ENCODE measurements at regions of chr6 and their contacts with region 1.

Region 1: GRCh38 chr6:37432916-37433656 is at the start of gene CMTR1:
- DNase-seq: peak; percentile 99
- H3K4me3 Mint-ChIP-seq: peak within 1 kb of the TSS; percentile 96
- H3K27ac Mint-ChIP-seq: peak within 1 kb of the TSS; percentile 98
- H3K4me1 Mint-ChIP-seq: peaks cover 41% of the 10 kb centered on the region
- H3K27me3 Mint-ChIP-seq: peaks cover 5% of the 10 kb centered on the region
- total RNA-seq, gene CMTR1: 53.5 and 54.4 TPM in 2 replicates

Region 2: GRCh38 chr6:36985808-36986703 is 447.0 kb before region 1 on chr6 and contains the start of gene MTCH1:
- intact Hi-C with region 1: loop called (anchors 1 kb)
- DNase-seq: peak; percentile 87
- H3K4me3 Mint-ChIP-seq: peak within 1 kb of the TSS; percentile 99
- H3K27ac Mint-ChIP-seq: peak within 1 kb of the TSS; percentile 99
- H3K4me1 Mint-ChIP-seq: peaks cover 27% of the 10 kb centered on the region
- H3K27me3 Mint-ChIP-seq: peaks cover 10% of the 10 kb centered on the region
- total RNA-seq, gene MTCH1: 120 and 127 TPM in 2 replicates

Region 3: DNA sequence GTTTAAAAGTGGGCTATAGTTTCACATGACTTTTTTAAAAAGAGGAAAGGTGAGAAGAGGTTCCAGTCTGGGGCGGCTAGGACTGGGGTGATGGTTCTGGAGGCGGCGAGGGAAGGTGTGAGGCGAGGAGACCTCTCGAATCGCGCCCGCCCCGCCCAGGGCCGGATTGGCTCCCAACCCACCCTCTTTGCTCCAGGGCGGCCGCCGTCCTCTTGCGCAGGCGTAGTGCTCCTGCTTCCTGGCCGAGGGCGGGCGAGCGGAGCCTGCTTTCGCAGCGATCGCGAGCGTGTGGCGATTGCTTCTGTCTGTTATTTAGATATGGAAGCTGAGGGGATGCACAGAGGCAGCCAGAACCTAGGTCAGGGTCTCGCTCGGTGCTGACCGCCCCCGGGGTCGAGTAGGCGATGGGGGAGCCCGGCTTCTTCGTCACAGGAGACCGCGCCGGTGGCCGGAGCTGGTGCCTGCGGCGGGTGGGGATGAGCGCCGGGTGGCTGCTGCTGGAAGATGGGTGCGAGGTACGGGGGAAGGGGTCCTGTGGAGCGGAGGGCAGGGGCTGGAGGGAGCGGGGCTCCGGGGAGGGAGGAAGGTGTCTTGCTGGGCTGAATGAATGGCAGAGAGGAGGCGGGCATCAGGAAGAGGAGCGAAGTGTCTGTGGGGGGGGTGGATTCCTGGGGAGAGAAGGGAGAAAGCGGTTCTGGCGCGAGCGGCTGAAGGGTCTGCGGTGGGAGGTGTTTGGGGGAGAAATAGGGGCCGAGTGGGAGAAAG is 79.1 kb before region 1 on chr6 and contains the start of gene RNF8:
- intact Hi-C with region 1: loop called (anchors 5 kb)
- DNase-seq: peak; percentile 90
- H3K4me3 Mint-ChIP-seq: peak within 1 kb of the TSS; percentile 94
- H3K27ac Mint-ChIP-seq: peak within 1 kb of the TSS; percentile 90
- H3K4me1 Mint-ChIP-seq: peaks cover 47% of the 10 kb centered on the region
- H3K27me3 Mint-ChIP-seq: peaks cover 7% of the 10 kb centered on the region
- total RNA-seq, gene RNF8: 30.0 and 34.2 TPM in 2 replicates

Region 4: GRCh38 chr6:37373822-37374471 is 59.1 kb before region 1 on chr6:
- intact Hi-C with region 1: no loop called
- DNase-seq: no peak
- H3K4me3 Mint-ChIP-seq: no peak overlapping the region
- H3K27ac Mint-ChIP-seq: no peak overlapping the region
- H3K4me1 Mint-ChIP-seq: peaks cover 18% of the 10 kb centered on the region
- H3K27me3 Mint-ChIP-seq: no peaks in the 10 kb centered on the region

Region 5: DNA sequence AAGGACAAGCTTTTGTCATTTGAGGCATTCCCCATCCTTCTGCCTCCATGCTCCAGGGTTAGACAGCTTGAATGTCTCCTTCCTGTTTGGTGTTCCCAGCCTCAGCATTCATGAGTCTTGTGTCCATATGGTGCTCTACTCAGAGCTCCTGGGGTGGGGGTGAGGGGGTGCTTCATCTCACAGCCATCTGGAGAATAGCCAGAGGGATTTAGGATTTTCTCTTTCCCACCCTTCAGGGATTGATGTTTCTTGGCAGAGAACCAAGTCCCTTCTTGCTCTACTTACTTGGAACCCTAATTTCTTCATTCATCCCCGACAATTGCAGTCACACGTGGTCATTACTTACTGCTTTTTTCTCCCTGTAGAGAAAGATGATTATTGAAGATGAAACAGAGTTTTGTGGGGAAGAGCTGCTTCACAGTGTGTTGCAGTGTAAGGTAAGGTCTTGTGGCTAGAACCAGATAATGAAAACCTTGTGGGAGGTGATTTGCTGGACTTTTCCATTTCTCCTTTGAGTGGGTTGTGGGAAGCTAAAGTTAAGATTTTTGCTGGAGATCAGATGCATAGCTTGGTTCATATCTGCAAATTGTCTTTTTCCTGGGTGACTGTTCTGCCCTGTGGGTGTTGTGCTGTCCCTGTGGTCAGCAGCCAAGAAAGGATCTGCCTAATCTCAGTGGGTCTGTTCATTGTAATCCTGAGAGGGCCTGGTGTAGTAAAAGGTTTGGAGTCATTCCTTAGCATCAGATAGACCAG is 18.5 kb after region 1 on chr6:
- intact Hi-C with region 1: loop called (anchors 2 kb)
- DNase-seq: no peak
- H3K4me3 Mint-ChIP-seq: no peak overlapping the region
- H3K27ac Mint-ChIP-seq: peak overlapping the region; percentile 82
- H3K4me1 Mint-ChIP-seq: peaks cover 27% of the 10 kb centered on the region
- H3K27me3 Mint-ChIP-seq: no peaks in the 10 kb centered on the region

Region 6: DNA sequence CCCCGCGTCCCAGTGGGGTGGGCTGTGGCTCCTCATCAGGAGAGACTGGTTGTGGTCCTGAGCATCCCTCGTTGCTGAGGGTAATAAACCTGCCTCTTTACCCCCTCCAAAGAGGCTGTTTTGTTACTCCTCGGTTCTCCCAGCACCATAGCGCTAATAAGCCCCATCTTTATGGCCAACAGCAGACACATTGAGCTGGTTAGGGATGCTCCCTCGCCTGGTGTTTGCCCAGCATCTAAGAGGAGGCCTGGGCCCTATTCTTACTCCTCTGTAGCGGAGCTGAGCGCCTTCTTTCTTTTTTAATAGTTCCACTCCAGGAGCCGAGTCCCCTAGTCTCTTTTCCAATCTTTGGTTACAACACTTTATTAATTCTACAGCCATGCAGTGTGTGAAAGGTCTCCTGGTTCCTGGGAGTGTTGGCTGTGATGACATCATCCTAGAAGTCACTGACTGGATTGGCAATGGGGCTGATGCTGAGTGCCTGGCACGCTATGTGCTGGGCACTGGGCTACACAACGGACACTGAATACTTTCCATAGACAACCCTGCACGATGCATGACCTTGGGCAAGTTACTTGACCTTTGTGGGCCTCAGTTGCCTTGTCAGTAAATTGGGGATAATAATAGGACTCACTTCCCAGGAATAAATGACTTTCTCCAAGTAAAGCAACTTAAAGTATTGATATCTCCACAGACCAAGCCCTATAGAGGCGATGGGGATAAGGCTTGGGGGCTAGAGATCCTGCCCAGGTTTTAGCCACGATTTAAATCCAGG is 117.3 kb after region 1 on chr6:
- intact Hi-C with region 1: loop called (anchors 1 kb)
- DNase-seq: no peak
- H3K4me3 Mint-ChIP-seq: no peak overlapping the region
- H3K27ac Mint-ChIP-seq: no peak overlapping the region
- H3K4me1 Mint-ChIP-seq: peaks cover 41% of the 10 kb centered on the region
- H3K27me3 Mint-ChIP-seq: peaks cover 11% of the 10 kb centered on the region

Region 7: DNA sequence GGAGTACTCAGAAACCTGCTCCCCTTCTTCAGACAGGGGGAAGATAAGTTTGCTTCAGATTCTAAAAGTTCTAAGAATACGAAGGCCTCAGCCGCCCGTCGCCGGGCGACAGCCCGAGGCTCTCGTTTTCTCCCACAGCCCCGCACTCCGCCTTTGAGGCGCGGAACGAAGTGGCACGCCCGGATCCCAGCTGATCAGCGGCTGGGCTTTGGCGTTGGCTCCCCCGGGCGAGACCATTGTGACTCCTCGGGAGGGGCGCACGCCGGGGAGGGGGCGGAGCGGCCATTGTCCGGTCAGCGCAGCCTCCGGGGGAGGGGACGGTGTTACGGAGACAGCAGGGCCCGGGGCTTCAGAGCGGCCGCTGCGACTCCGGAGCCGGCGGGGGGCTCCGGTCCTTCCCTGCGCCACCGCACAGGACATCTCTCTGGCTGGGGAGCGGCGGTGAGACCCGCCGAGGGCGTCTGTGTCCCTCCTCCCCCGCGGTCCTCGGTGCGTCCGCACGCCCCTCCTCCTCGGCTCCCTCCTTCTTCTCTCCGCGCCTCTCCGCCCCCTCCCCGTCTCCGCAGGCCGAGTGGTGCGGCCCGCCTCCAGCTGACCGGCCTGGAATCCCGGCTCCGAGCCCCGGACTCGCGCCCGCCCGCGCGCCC is 386.2 kb after region 1 on chr6 and contains the start of gene ZFAND3:
- intact Hi-C with region 1: loop called (anchors 2 kb)
- DNase-seq: peak; percentile 93
- H3K4me3 Mint-ChIP-seq: peak within 1 kb of the TSS; percentile 95
- H3K27ac Mint-ChIP-seq: peak within 1 kb of the TSS; percentile 97
- H3K4me1 Mint-ChIP-seq: peaks cover 52% of the 10 kb centered on the region
- H3K27me3 Mint-ChIP-seq: peaks cover 9% of the 10 kb centered on the region
- total RNA-seq, gene ZFAND3: 36.9 and 44.1 TPM in 2 replicates